ENCODE measurements at regions of chr4 and their contacts with region 1.

Region 1: DNA sequence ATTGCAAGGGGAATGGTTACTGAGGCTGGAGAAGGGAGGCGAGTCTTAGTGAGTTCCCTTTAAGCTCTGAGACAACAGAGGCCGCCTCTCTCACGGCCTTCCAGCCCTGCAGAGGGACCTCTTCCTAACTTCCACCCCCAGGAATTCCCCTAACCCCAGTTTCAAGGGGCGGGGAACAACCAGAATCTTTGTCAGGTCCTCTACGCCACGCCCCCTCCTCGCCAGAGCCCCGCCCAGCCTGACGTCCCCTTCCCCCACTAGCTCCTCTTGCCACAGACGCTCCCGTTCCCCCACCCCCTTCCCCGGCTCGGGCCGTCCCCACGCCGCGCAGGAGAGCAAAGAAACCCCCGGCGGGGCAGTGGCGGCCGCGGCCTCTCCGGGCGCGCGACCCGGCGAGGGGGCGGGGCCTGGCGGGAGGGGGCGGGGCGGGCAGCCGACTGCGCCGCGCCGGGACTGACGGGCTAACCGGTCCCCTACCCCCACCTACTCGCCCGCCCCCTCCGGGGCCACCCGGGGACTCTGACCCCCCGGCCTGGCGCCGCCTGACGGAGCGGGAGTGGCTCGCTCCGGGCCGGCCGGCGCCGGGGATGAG is 12.3 kb upstream of the TMEM156 start:
- DNase-seq: peak; percentile 95
- ATAC-seq: peak; percentile 83
- H3K4me3 Mint-ChIP-seq: peak overlapping the region; percentile 78
- H3K27ac Mint-ChIP-seq: peak overlapping the region; percentile 85
- H3K4me1 Mint-ChIP-seq: peaks cover 53% of the 10 kb centered on the region
- H3K27me3 Mint-ChIP-seq: no peaks in the 10 kb centered on the region

Region 2: DNA sequence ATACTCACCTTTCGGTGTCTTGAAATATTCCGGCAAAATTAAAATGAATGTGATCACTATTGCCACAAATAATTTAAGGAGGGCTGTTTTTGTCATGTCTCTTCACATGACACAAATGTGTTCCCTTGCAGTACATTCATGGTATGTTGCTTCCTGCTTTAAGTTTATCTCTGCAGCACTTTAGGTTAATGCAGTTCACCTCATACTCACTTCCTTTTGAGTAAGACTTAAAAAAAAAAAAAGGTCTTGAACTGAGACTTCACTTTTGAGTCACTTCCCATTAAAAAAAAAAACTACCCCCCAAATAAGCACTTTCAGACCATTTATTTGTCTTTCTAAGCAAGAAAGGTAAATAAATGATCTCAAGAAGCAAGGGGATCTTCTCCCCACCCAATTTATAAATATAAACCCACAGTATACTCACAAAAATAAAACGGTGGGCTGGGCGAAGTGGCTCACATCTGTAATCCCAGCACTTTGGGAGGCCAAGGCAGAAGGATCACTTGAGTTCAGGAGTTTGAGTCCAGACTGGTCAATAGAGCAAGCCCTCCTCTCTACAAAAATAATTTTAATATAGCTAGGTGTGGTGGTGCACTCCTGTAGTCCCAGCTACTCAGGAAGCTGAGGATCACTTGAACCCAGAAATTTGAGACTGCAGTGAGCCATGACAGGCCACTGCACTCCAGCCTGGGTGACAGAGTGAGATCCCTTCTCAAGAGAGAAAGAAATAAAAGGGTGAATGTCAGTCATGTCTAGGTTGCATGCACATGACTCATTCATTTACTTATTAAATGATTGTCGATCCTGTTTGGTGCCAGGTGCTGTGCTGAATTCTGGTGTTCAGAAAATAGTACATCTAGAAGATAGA is 12.0 kb before region 1 on chr4 and contains the start of gene TMEM156:
- CTCF ChIA-PET with region 1: interaction called, 23 read pairs
- DNase-seq: peak; percentile 62
- ATAC-seq: peak; percentile 89
- H3K4me3 Mint-ChIP-seq: peak within 1 kb of the TSS; percentile 88
- H3K27ac Mint-ChIP-seq: peak within 1 kb of the TSS; percentile 88
- H3K4me1 Mint-ChIP-seq: peaks cover 39% of the 10 kb centered on the region
- H3K27me3 Mint-ChIP-seq: no peaks in the 10 kb centered on the region
- total RNA-seq, gene TMEM156: 18.5 to 18.8 TPM

Measured in activated CD8-positive, alpha-beta memory T cell treated with anti-CD3 and anti-CD28 coated beads, Interleukin-2, amount 10 ng/mL, durations not matched to agents 7 days and 5 days (primary cell).